ENCODE measurements at regions of chr14 and their contacts with region 1.

Region 1: GRCh38 chr14:70907176-70907995 is at the start of gene PCNX1:
- DNase-seq: peak; percentile 94 to 95 (median 95)
- H3K4me3 ChIP-seq: peak within 1 kb of the TSS; percentile 74 to 79
- H3K4me3 Mint-ChIP-seq: peak within 1 kb of the TSS; percentile 88 to 99 (median 94)
- H3K27ac ChIP-seq: peak within 1 kb of the TSS; percentile 79
- H3K27ac Mint-ChIP-seq: peak within 1 kb of the TSS; percentile 95 to 99 (median 98)
- H3K4me1 ChIP-seq: peaks cover 61% of the 10 kb centered on the region
- H3K4me1 Mint-ChIP-seq: peaks cover 38 to 73% (median 61%) of the 10 kb centered on the region in 4 donors
- H3K27me3 ChIP-seq: no peaks in the 10 kb centered on the region
- H3K27me3 Mint-ChIP-seq: no peaks in the 10 kb centered on the region
- total RNA-seq, gene PCNX1: 115 to 128 TPM

Region 2: DNA sequence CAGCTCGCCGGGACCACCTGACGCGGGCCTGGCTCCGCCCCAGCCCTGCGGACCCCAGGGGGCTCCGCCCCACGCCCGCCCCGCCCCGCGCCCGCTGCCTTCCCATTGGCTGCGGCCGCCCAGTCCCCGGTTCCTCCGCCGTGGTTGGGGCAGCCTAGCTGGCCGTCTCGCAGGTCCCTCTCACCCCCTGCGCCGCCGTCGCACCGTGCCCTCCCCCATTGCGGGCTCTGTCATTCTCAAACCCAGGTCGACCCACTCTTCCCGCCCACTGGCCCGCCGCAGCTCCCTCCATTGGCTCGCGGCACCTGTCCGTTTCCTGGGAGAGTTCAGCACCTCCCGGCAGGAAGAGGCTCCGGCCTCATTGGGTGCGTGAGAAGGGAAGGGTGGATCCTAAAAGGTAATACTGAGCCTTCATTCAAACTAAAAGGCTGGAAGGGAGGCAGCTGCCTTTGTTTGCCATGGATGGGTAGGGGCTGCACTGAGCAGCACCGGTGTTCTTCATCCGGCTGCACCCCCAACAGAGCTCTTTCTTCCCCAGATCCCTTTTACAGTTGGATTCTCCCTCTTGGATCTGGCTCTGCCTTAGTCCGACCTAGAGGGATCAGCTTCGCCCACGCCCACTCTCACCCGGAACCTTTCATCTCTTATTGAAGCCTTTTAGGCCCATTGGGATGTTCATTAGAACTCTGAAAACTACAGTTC is 97.7 kb before region 1 on chr14:
- CTCF ChIA-PET with region 1: interaction called, 49 read pairs
- POLR2A ChIA-PET with region 1: interaction called, 9 read pairs
- intact Hi-C with region 1: no loop called
- DNase-seq: peak; percentile 79 to 91 (median 82)
- H3K4me3 ChIP-seq: peak overlapping the region; percentile 48 to 75
- H3K4me3 Mint-ChIP-seq: peak overlapping the region in 2 of 8 donors; percentile 93 to 94
- H3K27ac ChIP-seq: peak overlapping the region; percentile 54
- H3K27ac Mint-ChIP-seq: peak overlapping the region in 4 of 7 donors; percentile 73 to 90 (median 83)
- H3K4me1 ChIP-seq: peaks cover 17% of the 10 kb centered on the region
- H3K4me1 Mint-ChIP-seq: peaks cover 8 to 22% (median 12%) of the 10 kb centered on the region in 4 donors
- H3K27me3 ChIP-seq: no peaks in the 10 kb centered on the region
- H3K27me3 Mint-ChIP-seq: no peaks in the 10 kb centered on the region

Region 3: DNA sequence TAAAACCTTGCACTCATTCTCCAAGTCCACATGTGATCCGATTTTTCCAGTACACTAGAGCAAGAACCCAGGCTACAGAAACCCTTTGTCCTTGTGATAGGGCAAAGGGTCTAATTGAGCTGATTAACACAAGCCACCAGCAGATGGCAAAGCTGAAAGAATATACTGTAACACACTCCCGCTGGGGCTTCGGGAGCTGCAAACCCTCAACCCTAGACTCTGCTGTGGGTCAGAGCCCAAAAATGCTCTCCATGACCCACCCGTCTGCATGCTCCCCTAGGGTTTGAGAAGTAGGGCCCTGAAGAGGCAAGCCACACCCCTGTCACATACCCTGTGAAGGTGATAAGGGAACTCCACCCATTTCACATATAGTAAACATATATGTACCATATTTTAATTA is 33.8 kb before region 1 on chr14:
- CTCF ChIA-PET with region 1: interaction called, 85 read pairs
- POLR2A ChIA-PET with region 1: interaction called, 61 read pairs
- intact Hi-C with region 1: loop called (anchors 1 kb)
- DNase-seq: peak; percentile 31 to 43 (median 35)
- H3K4me3 ChIP-seq: no peak overlapping the region
- H3K4me3 Mint-ChIP-seq: peak overlapping the region in 5 of 8 donors; percentile 42 to 69 (median 61)
- H3K27ac ChIP-seq: no peak overlapping the region
- H3K27ac Mint-ChIP-seq: peak overlapping the region; percentile 68 to 90 (median 86)
- H3K4me1 ChIP-seq: peaks cover 23% of the 10 kb centered on the region
- H3K4me1 Mint-ChIP-seq: peaks cover 10 to 26% (median 21%) of the 10 kb centered on the region in 4 donors
- H3K27me3 ChIP-seq: no peaks in the 10 kb centered on the region
- H3K27me3 Mint-ChIP-seq: no peaks in the 10 kb centered on the region

Region 4: GRCh38 chr14:70919774-70920173 is 12.4 kb after region 1 on chr14:
- CTCF ChIA-PET with region 1: interaction called, 42 read pairs
- POLR2A ChIA-PET with region 1: interaction called, 73 read pairs
- intact Hi-C with region 1: loop called (anchors 1 kb)
- DNase-seq: peak in 1 of 5 donors; percentile 64
- H3K4me3 ChIP-seq: no peak overlapping the region
- H3K4me3 Mint-ChIP-seq: peak overlapping the region; percentile 38 to 75 (median 62)
- H3K27ac ChIP-seq: peak overlapping the region; percentile 35
- H3K27ac Mint-ChIP-seq: peak overlapping the region; percentile 54 to 91 (median 78)
- H3K4me1 ChIP-seq: peaks cover 97% of the 10 kb centered on the region
- H3K4me1 Mint-ChIP-seq: peaks cover 67 to 98% (median 84%) of the 10 kb centered on the region in 4 donors
- H3K27me3 ChIP-seq: no peaks in the 10 kb centered on the region
- H3K27me3 Mint-ChIP-seq: no peaks in the 10 kb centered on the region

Region 5: GRCh38 chr14:70942342-70942706 is 34.9 kb after region 1 on chr14:
- CTCF ChIA-PET with region 1: interaction called, 55 read pairs
- POLR2A ChIA-PET with region 1: interaction called, 96 read pairs
- intact Hi-C with region 1: loop called (anchors 1 kb)
- DNase-seq: no peak
- H3K4me3 ChIP-seq: no peak overlapping the region
- H3K4me3 Mint-ChIP-seq: peak overlapping the region in 7 of 8 donors; percentile 1 to 93 (median 65)
- H3K27ac ChIP-seq: no peak overlapping the region
- H3K27ac Mint-ChIP-seq: peak overlapping the region; percentile 80 to 98 (median 89)
- H3K4me1 ChIP-seq: peaks cover 42% of the 10 kb centered on the region
- H3K4me1 Mint-ChIP-seq: peaks cover 55 to 94% (median 73%) of the 10 kb centered on the region in 4 donors
- H3K27me3 ChIP-seq: no peaks in the 10 kb centered on the region
- H3K27me3 Mint-ChIP-seq: no peaks in the 10 kb centered on the region

Region 6: GRCh38 chr14:70962935-70963334 is 55.5 kb after region 1 on chr14:
- CTCF ChIA-PET with region 1: interaction called, 219 read pairs
- POLR2A ChIA-PET with region 1: interaction called, 17 read pairs
- intact Hi-C with region 1: no loop called
- DNase-seq: no peak
- H3K4me3 ChIP-seq: no peak overlapping the region
- H3K4me3 Mint-ChIP-seq: peak overlapping the region in 2 of 8 donors; percentile 1 to 41
- H3K27ac ChIP-seq: no peak overlapping the region
- H3K27ac Mint-ChIP-seq: peak overlapping the region in 6 of 7 donors; percentile 17 to 67 (median 52)
- H3K4me1 ChIP-seq: peaks cover 49% of the 10 kb centered on the region
- H3K4me1 Mint-ChIP-seq: peaks cover 30 to 70% (median 52%) of the 10 kb centered on the region in 4 donors
- H3K27me3 ChIP-seq: no peaks in the 10 kb centered on the region
- H3K27me3 Mint-ChIP-seq: no peaks in the 10 kb centered on the region

Region 7: DNA sequence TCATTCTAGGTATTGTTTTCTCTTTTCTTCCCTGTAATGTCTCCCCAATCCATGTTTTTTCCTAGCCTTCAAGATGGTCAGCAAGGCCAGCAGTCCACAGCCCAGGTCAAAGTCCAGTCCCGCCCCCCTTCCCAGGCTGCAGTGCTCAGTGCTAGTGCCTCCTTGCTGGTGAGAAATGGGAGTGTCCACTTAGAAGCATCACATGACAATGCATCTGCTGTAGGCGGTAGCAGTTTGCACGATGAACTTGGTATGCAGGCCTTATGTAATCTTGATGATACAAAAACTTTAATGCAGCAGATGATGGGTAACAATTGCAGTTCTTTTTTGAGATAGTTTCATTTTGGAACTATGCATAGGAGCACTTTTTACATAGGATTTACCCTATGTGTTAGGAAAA is 88.3 kb after region 1 on chr14:
- CTCF ChIA-PET with region 1: interaction called, 24 read pairs
- POLR2A ChIA-PET with region 1: interaction called, 10 read pairs
- intact Hi-C with region 1: no loop called
- DNase-seq: no peak
- H3K4me3 ChIP-seq: no peak overlapping the region
- H3K4me3 Mint-ChIP-seq: peak overlapping the region in 7 of 8 donors; percentile 27 to 85 (median 69)
- H3K27ac ChIP-seq: no peak overlapping the region
- H3K27ac Mint-ChIP-seq: peak overlapping the region; percentile 45 to 91 (median 78)
- H3K4me1 ChIP-seq: peaks cover 73% of the 10 kb centered on the region
- H3K4me1 Mint-ChIP-seq: peaks cover 36 to 78% (median 57%) of the 10 kb centered on the region in 4 donors
- H3K27me3 ChIP-seq: no peaks in the 10 kb centered on the region
- H3K27me3 Mint-ChIP-seq: no peaks in the 10 kb centered on the region